Activated naive CD4-positive, alpha-beta T cell treated with anti-CD3 and anti-CD28 coated beads for 36 hours (primary cell): ENCODE measurements at regions of chr1 and their contacts with region 1.

Region 1: DNA sequence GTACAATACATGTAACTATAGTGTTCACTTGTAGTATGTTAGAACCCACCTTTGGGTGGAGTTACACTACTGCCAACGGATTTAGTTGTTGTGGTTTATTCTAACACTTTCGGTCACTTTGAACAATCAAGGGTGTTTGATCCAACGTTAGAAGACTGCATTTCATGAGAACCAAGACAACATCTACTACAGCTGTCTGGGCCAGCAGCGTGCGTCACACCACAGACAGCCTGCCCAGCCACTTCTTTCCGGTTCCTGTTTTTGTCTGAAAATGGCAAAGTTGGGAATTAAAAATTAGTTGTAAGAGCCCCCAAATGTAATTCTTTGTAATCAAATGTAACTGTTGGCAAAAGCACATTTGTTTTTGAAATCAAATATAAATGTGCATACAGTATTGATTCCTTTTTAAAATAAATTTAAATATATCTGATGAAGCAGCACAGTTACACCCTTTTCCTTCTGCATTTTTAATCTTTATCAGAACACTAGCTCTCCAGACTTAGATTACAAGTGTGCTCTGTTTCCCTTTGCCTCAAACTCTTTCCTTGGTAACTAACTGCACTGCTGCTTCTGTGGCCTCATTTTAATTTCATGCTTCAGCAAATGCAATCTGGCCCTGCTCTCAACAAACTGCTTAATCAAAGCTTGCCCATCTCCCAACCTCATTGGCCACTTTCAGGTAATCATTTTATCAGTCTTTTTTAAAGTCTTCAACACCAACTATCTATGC is 86.6 kb upstream of the DPH5 start:
- DNase-seq: peak; percentile 75
- H3K4me3 Mint-ChIP-seq: peak overlapping the region; percentile 54
- H3K27ac Mint-ChIP-seq: peak overlapping the region; percentile 88
- H3K4me1 Mint-ChIP-seq: peaks cover 56% of the 10 kb centered on the region
- H3K27me3 Mint-ChIP-seq: no peaks in the 10 kb centered on the region

Region 2: GRCh38 chr1:101060992-101061391 is 51.2 kb before region 1 on chr1:
- CTCF ChIA-PET with region 1: no interaction called
- intact Hi-C with region 1: loop called (anchors 2 kb)
- DNase-seq: no peak
- H3K4me3 Mint-ChIP-seq: no peak overlapping the region
- H3K27ac Mint-ChIP-seq: no peak overlapping the region
- H3K4me1 Mint-ChIP-seq: peaks cover 24% of the 10 kb centered on the region
- H3K27me3 Mint-ChIP-seq: no peaks in the 10 kb centered on the region

Region 3: DNA sequence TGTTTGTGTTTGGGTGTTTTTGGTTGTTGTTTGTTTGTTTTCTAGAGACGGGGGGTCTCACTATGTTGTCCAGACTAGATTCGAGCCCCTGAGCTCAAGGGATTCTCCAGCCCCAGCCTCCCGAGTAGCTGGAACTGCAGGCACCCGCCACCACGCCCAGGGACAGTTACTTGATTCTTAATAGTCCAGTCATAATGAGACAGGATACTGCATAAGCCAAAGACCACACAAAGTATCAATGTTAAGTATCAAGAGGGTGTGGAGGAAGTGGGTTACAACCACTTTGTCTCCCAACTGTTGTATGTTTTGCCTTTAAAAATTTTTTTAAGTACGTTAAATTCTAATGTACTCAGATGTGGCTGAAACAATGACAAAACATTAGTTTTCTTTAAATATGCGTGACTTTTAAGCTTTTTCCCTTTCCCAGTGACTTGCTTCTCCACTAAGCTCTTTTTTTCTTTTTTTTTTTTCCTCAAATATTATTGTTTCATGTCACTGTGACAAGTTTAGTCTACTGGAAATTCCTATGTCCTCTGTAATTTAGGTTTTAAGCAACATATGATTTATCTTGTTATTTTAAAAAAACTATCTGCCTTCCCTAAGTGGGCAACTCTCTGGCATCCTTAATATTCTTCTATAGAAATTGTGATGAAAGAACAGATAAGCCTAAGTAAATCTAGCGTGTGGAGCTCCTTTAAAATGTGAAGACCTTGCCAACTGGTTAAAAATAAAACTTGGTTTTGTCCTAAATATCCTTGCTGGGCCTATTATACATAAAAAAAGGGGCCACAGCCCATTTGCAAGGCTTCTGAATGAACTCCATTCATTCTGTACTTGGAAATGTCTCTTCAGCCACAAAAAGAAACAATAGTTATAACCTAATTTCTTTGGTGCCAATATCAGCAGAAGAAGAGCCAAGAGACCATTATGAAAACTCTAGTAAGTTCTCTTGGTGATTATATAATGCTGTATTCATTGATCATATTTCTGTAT is 30.4 kb before region 1 on chr1:
- CTCF ChIA-PET with region 1: no interaction called
- intact Hi-C with region 1: loop called (anchors 1 kb)
- DNase-seq: peak; percentile 62
- H3K4me3 Mint-ChIP-seq: peak overlapping the region; percentile 10
- H3K27ac Mint-ChIP-seq: peak overlapping the region; percentile 48
- H3K4me1 Mint-ChIP-seq: peaks cover 26% of the 10 kb centered on the region
- H3K27me3 Mint-ChIP-seq: no peaks in the 10 kb centered on the region

Region 4: GRCh38 chr1:101122452-101123166 is 10.4 kb after region 1 on chr1:
- CTCF ChIA-PET with region 1: no interaction called
- intact Hi-C with region 1: loop called (anchors 1 kb)
- DNase-seq: peak; percentile 35
- H3K4me3 Mint-ChIP-seq: no peak overlapping the region
- H3K27ac Mint-ChIP-seq: no peak overlapping the region
- H3K4me1 Mint-ChIP-seq: peaks cover 51% of the 10 kb centered on the region
- H3K27me3 Mint-ChIP-seq: no peaks in the 10 kb centered on the region